HEK293 (cell line): ENCODE measurements at regions of chr11 and their contacts with region 1.

Region 1: GRCh38 chr11:7986768-7987559 is at the start of gene EIF3F:
- H3K4me3 ChIP-seq: peak within 1 kb of the TSS; percentile 62
- H3K27ac ChIP-seq: no peak within 1 kb of the TSS; the same call in 1 of the 2 replicates
- H3K4me1 ChIP-seq: 0 out of 2 replicates have a peak, but pooled peaks cover 3% of the 10 kb centered on the region
- CTCF ChIP-seq: peak; percentile 78

Region 2: DNA sequence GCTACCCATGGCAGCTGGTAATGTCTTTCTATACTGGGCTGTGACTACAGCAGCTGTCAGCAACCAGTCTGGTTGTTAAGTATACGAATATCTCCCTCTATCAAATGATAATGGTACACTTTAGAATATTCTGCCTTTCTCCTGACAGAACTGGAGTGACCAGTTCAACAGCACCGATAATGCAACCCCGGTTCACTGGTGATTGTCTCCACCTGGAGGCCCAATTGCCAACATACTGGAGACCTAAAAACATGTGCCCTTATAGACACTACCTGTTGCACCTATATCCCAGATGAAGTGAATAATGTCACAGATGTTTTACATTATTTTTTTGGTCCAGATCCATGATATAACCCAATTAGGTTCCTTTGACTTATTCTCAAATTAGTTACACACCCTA is 211.3 kb before region 1 on chr11:
- CTCF ChIA-PET with region 1: no interaction called
- POLR2A ChIA-PET with region 1: no interaction called
- H3K4me3 ChIP-seq: no peak overlapping the region
- H3K27ac ChIP-seq: no peak overlapping the region
- H3K4me1 ChIP-seq: no peaks in the 10 kb centered on the region
- CTCF ChIP-seq: no peak

Region 3: DNA sequence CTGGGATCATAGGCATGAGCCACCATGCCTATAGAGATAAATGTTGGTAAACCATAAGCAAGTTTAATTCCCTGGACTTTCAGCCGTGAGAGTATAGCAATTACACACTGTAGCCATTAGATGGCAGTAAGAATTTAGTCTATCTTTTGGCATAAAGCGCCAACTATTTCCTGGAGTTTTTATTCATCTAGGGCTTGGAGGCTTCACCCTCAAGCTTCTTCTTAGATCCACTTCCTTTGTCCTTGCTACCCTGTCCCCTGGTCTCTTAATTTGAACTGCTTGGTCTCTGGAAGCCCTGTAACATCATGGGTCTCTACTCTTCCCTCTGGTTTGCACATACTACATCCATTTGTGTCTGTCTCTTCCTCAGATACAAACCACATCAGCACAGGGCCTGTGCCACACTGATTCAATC is 94.1 kb before region 1 on chr11:
- CTCF ChIA-PET with region 1: interaction called, 85 read pairs
- POLR2A ChIA-PET with region 1: interaction called, 9 read pairs
- H3K4me3 ChIP-seq: no peak overlapping the region
- H3K27ac ChIP-seq: no peak overlapping the region
- H3K4me1 ChIP-seq: no peaks in the 10 kb centered on the region
- CTCF ChIP-seq: no peak

Region 4: DNA sequence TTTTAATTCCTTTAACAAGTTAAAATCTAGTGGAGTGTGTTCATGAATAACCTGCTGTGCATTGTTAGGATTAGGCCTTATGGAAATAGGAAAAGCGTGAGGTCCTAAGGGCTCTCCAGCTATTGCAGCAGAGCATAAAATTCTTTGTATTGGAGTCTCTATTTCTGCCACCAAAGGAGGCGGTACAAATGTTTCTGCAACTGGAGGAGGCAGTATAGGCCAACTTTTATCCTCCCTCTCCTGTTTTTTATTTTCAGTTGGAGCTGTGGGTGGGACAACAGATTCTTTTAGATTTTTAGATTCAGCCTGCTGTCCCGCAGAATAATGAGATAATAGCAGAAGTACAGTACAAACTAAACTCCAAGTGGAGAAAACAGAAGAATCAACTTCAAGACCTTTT is 82.0 kb before region 1 on chr11:
- CTCF ChIA-PET with region 1: interaction called, 13 read pairs
- POLR2A ChIA-PET with region 1: interaction called, 3 read pairs
- H3K4me3 ChIP-seq: no peak overlapping the region
- H3K27ac ChIP-seq: no peak overlapping the region
- H3K4me1 ChIP-seq: no peaks in the 10 kb centered on the region
- CTCF ChIP-seq: no peak

Region 5: GRCh38 chr11:8011981-8012444 is 25.0 kb after region 1 on chr11:
- CTCF ChIA-PET with region 1: interaction called, 10 read pairs
- POLR2A ChIA-PET with region 1: interaction called, 3 read pairs
- H3K4me3 ChIP-seq: no peak overlapping the region
- H3K27ac ChIP-seq: no peak overlapping the region
- H3K4me1 ChIP-seq: no peaks in the 10 kb centered on the region
- CTCF ChIP-seq: no peak